ENCODE measurements at regions of chr4 and their contacts with region 1.

Region 1: DNA sequence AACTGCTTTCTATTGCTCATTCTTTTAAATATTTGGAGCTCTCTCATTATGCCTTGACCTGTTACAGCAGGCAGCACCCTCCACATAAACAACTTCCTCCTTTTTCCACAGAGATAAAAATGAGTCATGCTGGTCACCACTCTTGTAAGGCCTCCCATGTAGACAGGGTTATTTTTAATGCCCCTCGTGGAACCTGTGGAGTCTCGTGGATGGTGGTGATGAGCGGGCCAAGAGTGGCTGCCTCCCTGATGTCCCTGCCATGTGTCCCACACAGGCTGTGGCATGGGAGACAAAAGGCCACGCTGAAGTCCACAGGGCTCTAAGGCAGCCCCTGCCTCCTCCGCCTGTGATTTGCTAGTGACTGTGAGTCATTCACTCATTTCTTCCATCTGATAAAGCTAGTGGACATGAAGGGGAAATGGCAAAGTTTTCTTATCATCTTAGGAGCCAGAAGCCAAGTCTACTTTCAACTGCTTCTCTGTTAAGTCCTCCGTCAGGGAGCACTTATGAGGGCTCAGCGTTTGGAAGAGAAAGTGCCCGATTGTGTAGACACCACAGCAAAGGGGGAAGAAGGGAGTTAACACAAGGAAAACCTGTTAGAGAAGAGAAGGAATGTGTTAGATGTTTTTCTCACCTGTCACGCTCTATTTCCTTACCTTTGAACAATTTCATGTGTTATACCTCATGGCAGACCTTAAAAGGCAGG is 121.6 kb upstream of the FAT1 start:
- DNase-seq: no peak
- H3K4me3 ChIP-seq: no peak overlapping the region
- H3K27ac ChIP-seq: peak overlapping the region; percentile 83 to 85
- H3K4me1 ChIP-seq: no peaks in the 10 kb centered on the region
- H3K27me3 ChIP-seq: no peaks in the 10 kb centered on the region
- CTCF ChIP-seq: no peak
- POLR2A ChIP-seq: no peak

Region 2: GRCh38 chr4:186859420-186859819 is 14.1 kb after region 1 on chr4:
- intact Hi-C with region 1: loop called (anchors 1 kb)
- DNase-seq: no peak
- H3K4me3 ChIP-seq: no peak overlapping the region
- H3K27ac ChIP-seq: no peak overlapping the region
- H3K4me1 ChIP-seq: no peaks in the 10 kb centered on the region
- H3K27me3 ChIP-seq: no peaks in the 10 kb centered on the region
- CTCF ChIP-seq: no peak
- POLR2A ChIP-seq: no peak

Measured in breast epithelium (tissue), 4 donors.